Activated CD4-positive, alpha-beta T cell treated with anti-CD3 and anti-CD28 coated beads for 36 hours (primary cell): ENCODE measurements at regions of chr22 and their contacts with region 1.

Region 1: DNA sequence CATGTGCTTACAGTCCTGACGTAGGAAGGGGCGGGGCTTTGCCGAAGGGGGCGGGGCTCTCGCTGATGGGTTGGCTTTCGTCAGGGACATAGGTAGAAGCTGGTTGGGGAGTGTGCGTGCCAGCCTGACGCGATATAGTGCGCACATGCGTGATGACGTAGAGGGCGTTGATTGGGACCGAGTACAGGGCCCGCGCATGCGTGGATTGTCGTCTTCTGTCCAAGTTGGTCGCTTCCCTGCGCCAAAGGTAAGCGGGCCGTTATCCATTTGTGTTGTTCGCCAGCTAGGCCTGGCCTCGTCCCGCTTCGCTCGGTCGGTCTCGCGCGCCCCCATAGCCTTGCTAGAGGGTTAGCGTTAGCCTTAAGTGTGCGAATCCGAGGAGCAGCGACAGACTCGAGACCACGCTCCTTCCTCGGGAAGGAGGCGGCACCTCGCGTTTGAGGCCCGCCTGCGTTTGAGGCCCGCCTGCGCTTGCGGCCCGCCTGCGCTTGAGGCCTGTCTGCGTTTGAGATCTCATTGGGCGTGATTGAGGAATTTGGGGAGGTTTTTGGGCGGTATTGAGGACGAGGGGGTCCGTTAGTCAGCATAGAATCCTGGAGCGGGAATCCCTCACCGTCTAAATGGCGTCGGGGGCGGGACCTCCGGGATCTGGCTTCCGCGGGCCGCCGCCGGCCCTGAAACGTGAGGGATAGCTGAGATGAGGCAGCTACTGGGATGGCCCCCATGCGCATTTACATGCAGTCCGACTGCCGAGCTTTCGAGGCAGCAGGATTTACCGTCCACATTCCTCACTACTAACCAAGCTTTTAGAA is at the start of gene XRCC6:
- DNase-seq: peak; percentile 100
- ATAC-seq: peak; percentile 91
- H3K4me3 Mint-ChIP-seq: peak within 1 kb of the TSS; percentile 98
- H3K27ac Mint-ChIP-seq: peak within 1 kb of the TSS; percentile 99
- H3K4me1 Mint-ChIP-seq: peaks cover 48% of the 10 kb centered on the region
- H3K27me3 Mint-ChIP-seq: no peaks in the 10 kb centered on the region
- total RNA-seq, gene XRCC6: 427 to 469 TPM

Region 2: GRCh38 chr22:40856513-40857308 is 764.6 kb before region 1 on chr22 and contains the starts of genes ST13 and XPNPEP3:
- CTCF ChIA-PET with region 1: no interaction called
- POLR2A ChIA-PET with region 1: no interaction called
- intact Hi-C with region 1: loop called in 1 of 2 experiments (anchors 2 kb)
- DNase-seq: peak; percentile 98
- ATAC-seq: peak; percentile 96
- H3K4me3 Mint-ChIP-seq: peak within 1 kb of the TSS; percentile 97
- H3K27ac Mint-ChIP-seq: peak within 1 kb of the TSS; percentile 99
- H3K4me1 Mint-ChIP-seq: peaks cover 53% of the 10 kb centered on the region
- H3K27me3 Mint-ChIP-seq: no peaks in the 10 kb centered on the region
- total RNA-seq, gene ST13: 260 to 297 TPM
- total RNA-seq, gene XPNPEP3: 21.5 to 25.8 TPM

Region 3: DNA sequence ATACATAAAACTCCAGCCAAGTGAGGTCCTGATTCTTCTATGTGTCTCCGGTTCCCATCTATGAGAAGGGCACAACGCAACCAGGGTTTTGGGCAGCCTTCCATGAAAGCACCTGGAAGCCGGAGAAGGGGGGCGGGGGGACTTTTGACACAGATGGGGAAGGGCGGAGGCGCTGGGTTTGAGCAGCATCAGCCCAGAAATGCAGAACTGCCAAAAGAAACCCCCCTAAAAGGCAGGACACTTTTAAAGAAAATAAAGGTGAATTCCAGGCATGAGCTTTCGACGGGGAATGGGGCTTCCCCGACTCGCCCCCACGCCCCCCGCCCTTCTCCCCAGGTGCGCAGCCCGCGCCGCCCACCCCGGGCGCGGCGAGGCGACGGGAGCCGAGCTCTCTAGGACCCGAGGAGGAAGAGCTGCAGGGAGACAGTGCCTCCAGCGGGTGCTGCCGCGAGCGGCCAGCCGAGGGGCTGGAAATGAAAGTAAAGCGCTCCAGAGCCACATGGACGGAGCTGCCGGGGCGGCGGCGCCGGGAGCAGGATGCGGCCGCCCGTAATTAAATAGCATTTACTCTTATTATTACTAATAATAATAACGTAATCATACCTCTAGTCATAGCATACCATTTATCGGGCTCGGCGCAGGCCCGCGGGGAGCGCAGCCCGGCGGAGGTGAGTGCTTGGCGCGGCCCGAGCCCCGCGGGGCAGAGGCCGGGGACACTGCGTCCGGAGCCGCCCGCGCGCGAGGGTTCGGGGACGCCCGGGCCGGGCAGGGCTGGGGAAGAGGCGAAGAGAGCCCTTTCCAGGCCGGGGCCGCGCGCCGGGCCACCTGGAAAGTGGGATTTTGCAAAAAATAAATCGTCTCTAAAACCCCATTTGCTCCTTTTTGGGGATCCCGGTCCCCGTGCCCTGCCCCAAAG is 319.9 kb before region 1 on chr22 and contains the start of gene ZC3H7B:
- CTCF ChIA-PET with region 1: no interaction called
- POLR2A ChIA-PET with region 1: no interaction called
- intact Hi-C with region 1: loop called in 1 of 2 experiments (anchors 5 kb)
- DNase-seq: peak; percentile 92
- ATAC-seq: peak; percentile 96
- H3K4me3 Mint-ChIP-seq: peak within 1 kb of the TSS; percentile 74
- H3K27ac Mint-ChIP-seq: peak within 1 kb of the TSS; percentile 76
- H3K4me1 Mint-ChIP-seq: peaks cover 31% of the 10 kb centered on the region
- H3K27me3 Mint-ChIP-seq: no peaks in the 10 kb centered on the region
- total RNA-seq, gene ZC3H7B: 41.7 to 43.4 TPM

Region 4: GRCh38 chr22:41474872-41475459 is 146.3 kb before region 1 on chr22:
- CTCF ChIA-PET with region 1: no interaction called
- POLR2A ChIA-PET with region 1: no interaction called
- intact Hi-C with region 1: no loop called
- DNase-seq: no peak
- ATAC-seq: no peak
- H3K4me3 Mint-ChIP-seq: no peak overlapping the region
- H3K27ac Mint-ChIP-seq: no peak overlapping the region
- H3K4me1 Mint-ChIP-seq: peaks cover 43% of the 10 kb centered on the region
- H3K27me3 Mint-ChIP-seq: no peaks in the 10 kb centered on the region

Region 5: GRCh38 chr22:41532908-41533825 is 88.1 kb before region 1 on chr22:
- CTCF ChIA-PET with region 1: no interaction called
- POLR2A ChIA-PET with region 1: no interaction called
- intact Hi-C with region 1: no loop called
- DNase-seq: peak; percentile 88
- ATAC-seq: peak; percentile 92
- H3K4me3 Mint-ChIP-seq: no peak overlapping the region
- H3K27ac Mint-ChIP-seq: peak overlapping the region; percentile 19
- H3K4me1 Mint-ChIP-seq: no peaks in the 10 kb centered on the region
- H3K27me3 Mint-ChIP-seq: no peaks in the 10 kb centered on the region

Region 6: GRCh38 chr22:41543854-41544670 is 77.2 kb before region 1 on chr22 and contains the start of gene POLR3H:
- CTCF ChIA-PET with region 1: interaction called, 7 read pairs
- POLR2A ChIA-PET with region 1: no interaction called
- intact Hi-C with region 1: loop called (anchors 1 to 5 kb)
- DNase-seq: peak; percentile 99
- ATAC-seq: peak; percentile 99
- H3K4me3 Mint-ChIP-seq: peak within 1 kb of the TSS; percentile 81
- H3K27ac Mint-ChIP-seq: peak within 1 kb of the TSS; percentile 90
- H3K4me1 Mint-ChIP-seq: peaks cover 40% of the 10 kb centered on the region
- H3K27me3 Mint-ChIP-seq: no peaks in the 10 kb centered on the region
- total RNA-seq, gene POLR3H: 18.3 to 24.6 TPM

Region 7: GRCh38 chr22:41682033-41682807 is 60.9 kb after region 1 on chr22:
- CTCF ChIA-PET with region 1: interaction called, 3 read pairs
- POLR2A ChIA-PET with region 1: interaction called, 4 read pairs
- intact Hi-C with region 1: loop called in 1 of 2 experiments (anchors 1 kb)
- DNase-seq: peak; percentile 89
- ATAC-seq: peak; percentile 89
- H3K4me3 Mint-ChIP-seq: peak overlapping the region; percentile 99
- H3K27ac Mint-ChIP-seq: peak overlapping the region; percentile 97
- H3K4me1 Mint-ChIP-seq: peaks cover 32% of the 10 kb centered on the region
- H3K27me3 Mint-ChIP-seq: no peaks in the 10 kb centered on the region

Region 8: GRCh38 chr22:42079319-42080251 is 458.3 kb after region 1 on chr22 and contains the start of gene SMDT1:
- CTCF ChIA-PET with region 1: no interaction called
- POLR2A ChIA-PET with region 1: no interaction called
- intact Hi-C with region 1: loop called in 1 of 2 experiments (anchors 1 kb)
- DNase-seq: peak; percentile 99
- ATAC-seq: peak; percentile 95
- H3K4me3 Mint-ChIP-seq: peak within 1 kb of the TSS; percentile 90
- H3K27ac Mint-ChIP-seq: peak within 1 kb of the TSS; percentile 96
- H3K4me1 Mint-ChIP-seq: peaks cover 29% of the 10 kb centered on the region
- H3K27me3 Mint-ChIP-seq: no peaks in the 10 kb centered on the region
- total RNA-seq, gene SMDT1: 17.2 to 45.4 TPM